Activated naive CD4-positive, alpha-beta T cell treated with anti-CD3 and anti-CD28 coated beads, Interleukin-2, amount 10 ng/mL, durations not matched to agents 7 days and 5 days (primary cell): ENCODE measurements at regions of chr17 and their contacts with region 1.

Region 1: DNA sequence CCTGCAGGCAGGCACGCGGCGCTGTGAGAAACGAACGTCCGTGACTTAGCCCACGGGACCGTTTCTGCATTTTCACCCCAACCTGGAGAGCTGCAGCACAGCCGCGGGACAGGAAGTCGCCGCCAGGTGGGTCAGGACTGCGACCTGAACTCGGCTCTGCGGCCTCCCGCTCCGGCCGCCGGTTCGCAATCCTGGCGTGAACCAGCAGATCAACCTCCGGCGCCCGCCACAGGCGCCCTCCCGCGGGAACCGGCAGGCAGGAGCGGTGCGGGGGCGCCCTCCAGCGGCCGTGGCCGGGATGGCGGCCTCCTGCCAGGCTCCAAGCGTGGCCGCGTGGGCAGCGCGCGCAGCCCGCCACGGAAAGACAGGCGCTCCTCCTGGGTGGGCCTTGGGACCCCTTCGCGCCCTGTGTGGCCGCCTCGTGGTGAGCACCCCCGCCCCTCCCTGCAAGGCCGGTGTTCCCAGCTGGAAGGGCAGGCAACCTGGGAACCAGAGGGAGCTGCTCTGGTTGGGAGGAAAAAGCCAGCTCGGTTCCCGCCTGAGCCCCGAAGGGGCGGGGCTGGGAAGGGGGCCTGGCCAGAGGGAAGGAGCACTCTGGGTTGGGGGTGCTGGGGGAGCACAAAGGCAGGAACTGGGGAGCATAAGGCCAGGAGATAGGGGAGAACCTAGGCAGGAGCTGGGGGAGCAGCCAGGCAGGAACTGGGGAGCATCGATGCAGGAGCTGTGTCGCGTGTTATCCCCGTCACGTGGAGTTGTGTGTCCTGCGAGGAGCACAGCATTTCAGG is 28.2 kb downstream of the ACTG1 start:
- DNase-seq: peak; percentile 88
- H3K4me3 Mint-ChIP-seq: peak overlapping the region; percentile 10
- H3K27ac Mint-ChIP-seq: no peak overlapping the region
- H3K4me1 Mint-ChIP-seq: peaks cover 19% of the 10 kb centered on the region
- H3K27me3 Mint-ChIP-seq: peaks cover 58% of the 10 kb centered on the region

Region 2: DNA sequence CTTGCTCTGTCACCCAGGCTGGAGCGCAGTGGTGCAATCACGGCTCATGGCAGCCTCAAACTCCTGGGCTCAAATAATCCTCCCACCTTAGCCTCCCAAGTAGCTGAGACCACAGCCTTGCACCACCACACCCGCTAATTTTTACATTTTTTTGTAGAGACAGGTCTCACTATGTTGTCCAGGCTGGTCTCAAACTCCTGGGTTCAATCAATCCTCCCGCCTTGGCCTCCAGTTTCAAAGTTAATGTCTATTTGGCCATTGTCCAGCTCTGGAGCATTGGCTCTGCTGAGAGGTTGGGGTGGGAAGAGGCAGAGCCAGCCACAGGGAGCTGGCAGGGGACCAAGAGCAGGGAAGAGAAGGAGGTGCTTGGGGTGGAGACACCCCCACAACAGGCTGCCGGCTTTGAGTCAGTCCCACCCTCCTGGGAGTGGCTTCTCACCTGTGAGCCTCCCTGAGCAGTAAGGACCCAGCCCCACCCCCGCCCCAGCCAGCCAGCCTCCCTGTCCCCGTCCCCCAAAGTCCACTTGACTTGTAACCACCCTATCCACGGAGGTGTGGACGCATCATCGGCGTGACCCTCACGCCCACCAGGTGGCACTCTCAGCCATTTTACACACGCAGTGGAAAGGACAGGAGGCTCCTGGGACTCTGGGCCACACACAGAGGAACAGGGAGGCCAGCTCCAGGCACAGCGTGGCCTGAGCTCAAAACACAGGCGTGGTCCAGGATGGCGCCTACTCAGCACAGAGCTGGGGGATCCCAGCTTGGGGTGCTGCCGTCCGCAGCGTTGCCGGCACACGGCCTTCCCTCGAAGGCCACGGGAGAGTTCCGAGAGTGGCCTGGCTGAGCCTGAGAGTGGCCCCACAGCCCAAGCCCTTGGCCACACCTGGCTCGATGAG is 341.8 kb before region 1 on chr17:
- CTCF ChIA-PET with region 1: interaction called, 10 read pairs
- DNase-seq: peak; percentile 80
- H3K4me3 Mint-ChIP-seq: no peak overlapping the region
- H3K27ac Mint-ChIP-seq: no peak overlapping the region
- H3K4me1 Mint-ChIP-seq: no peaks in the 10 kb centered on the region
- H3K27me3 Mint-ChIP-seq: no peaks in the 10 kb centered on the region

Region 3: DNA sequence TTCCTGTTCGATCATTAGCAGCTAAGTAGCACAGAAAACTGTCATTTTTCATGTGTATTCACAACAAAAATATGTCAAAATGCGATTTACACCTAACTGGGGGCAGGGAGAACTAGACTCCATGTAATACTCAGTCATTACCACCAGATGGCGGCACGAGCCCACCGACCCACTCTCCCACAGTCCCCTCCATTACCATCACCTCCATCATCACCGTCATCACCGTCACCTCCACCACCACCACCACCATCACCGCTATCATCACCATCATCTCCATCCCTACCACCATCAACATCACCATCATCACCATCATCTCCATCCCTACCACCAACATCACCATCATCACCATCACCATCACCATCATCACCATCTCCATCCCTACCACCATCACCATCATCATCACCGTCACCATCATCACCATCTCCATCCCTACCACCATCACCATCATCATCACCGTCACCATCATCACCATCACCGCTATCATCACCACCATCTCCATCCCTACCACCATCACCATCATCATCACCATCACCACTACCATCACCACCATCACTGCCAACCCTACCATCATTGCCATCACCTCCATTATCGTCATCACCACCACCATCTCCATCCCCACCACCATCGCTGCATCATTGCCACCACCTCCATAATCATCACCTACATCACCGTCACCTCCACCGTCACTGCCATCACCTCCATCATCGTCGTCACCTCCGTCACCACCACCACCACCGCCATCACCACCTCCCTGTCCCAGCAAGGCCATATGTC is 230.8 kb before region 1 on chr17:
- CTCF ChIA-PET with region 1: interaction called, 30 read pairs
- DNase-seq: peak; percentile 67
- H3K4me3 Mint-ChIP-seq: no peak overlapping the region
- H3K27ac Mint-ChIP-seq: no peak overlapping the region
- H3K4me1 Mint-ChIP-seq: peaks cover 2% of the 10 kb centered on the region
- H3K27me3 Mint-ChIP-seq: no peaks in the 10 kb centered on the region

Region 4: GRCh38 chr17:81294856-81295680 is 189.3 kb before region 1 on chr17 and contains the start of gene SLC38A10:
- CTCF ChIA-PET with region 1: interaction called, 26 read pairs
- DNase-seq: peak; percentile 96
- H3K4me3 Mint-ChIP-seq: peak within 1 kb of the TSS; percentile 94
- H3K27ac Mint-ChIP-seq: peak within 1 kb of the TSS; percentile 95
- H3K4me1 Mint-ChIP-seq: peaks cover 48% of the 10 kb centered on the region
- H3K27me3 Mint-ChIP-seq: peaks cover 15% of the 10 kb centered on the region